ENCODE measurements at regions of chr11 and their contacts with region 1.

Region 1: DNA sequence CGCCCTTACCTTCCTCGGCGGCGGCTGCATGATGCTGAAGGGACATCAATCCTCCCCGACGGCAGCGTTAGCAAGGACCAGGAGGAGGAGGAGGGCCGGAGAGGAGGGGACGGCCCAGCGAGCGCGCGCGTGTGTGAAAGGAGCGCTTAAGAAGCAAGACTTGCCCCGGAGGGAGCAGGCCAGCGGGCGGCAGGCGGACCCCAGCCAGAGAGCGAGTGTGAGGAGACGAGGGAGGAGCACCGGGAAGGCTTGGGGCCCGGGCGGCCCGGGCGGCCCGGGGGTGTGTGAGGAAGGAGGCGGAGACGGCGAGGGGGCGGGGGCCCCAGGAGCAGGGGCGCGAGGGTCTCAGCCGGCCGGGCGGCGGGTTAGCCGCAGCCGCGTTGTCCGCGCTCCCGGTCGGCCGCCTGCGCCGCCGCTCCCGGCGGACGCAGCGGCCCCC is 251 bp downstream of the FCHSD2 start:
- DNase-seq: peak; percentile 91
- ATAC-seq: peak; percentile 48

Region 2: GRCh38 chr11:72224564-72225410 is 917.1 kb before region 1 on chr11 and contains the start of gene INPPL1:
- intact Hi-C with region 1: no loop called
- DNase-seq: peak; percentile 80
- ATAC-seq: no peak
- total RNA-seq, gene INPPL1: 130 TPM

Region 3: GRCh38 chr11:72752088-72752914 is 389.6 kb before region 1 on chr11 and contains the start of gene ARAP1:
- intact Hi-C with region 1: no loop called
- DNase-seq: peak; percentile 91
- ATAC-seq: peak; percentile 92
- total RNA-seq, gene ARAP1: 55.2 TPM

Region 4: DNA sequence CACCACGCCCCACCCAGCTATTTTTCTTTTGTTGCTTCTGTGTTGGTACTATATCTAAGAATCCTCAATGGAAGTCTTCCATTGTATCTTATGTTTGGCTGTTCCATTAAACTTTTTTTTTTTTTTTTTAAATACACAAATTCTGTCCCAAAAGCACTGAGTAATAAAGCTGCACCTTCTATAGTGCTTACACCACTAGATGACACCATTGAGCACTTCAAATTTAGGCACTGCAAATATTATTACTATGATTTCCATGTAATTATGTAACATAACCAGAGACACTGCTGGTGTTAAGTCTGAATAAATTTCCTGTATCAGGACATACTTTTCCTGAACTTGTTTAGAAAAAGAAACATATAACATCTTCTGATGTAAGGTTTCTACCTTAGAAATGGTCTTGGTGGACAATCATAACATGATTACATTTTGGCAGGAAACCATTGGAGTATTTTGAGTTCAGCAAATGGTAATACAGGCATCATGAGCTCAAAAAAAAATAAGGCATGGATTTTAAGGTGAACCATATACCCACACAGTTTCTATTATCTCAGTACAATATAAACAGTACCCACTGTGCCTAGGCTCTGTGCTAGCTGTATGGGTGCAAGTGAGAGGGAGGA is 217.2 kb before region 1 on chr11:
- intact Hi-C with region 1: loop called (anchors 5 kb)
- DNase-seq: no peak
- ATAC-seq: peak; percentile 52